Activated B cell treated with CpG ODN at 0.5 μM for 24 hours (primary cell): ENCODE measurements at regions of chr5 and their contacts with region 1.

Region 1: GRCh38 chr5:136080483-136081216 is 51.9 kb downstream of the TGFBI start:
- DNase-seq: peak; percentile 50
- ATAC-seq: peak; percentile 94
- H3K4me3 Mint-ChIP-seq: peak overlapping the region; percentile 77
- H3K27ac Mint-ChIP-seq: peak overlapping the region; percentile 47
- H3K4me1 Mint-ChIP-seq: peaks cover 15% of the 10 kb centered on the region
- H3K27me3 Mint-ChIP-seq: peaks cover 31% of the 10 kb centered on the region
- CTCF ChIP-seq: no peak

Region 2: GRCh38 chr5:136132557-136133221 is 52.0 kb after region 1 on chr5 and contains the start of gene SMAD5:
- CTCF ChIA-PET with region 1: no interaction called
- POLR2A ChIA-PET with region 1: no interaction called
- intact Hi-C with region 1: loop called (anchors 2 kb)
- DNase-seq: peak; percentile 83
- ATAC-seq: peak; percentile 91
- H3K4me3 Mint-ChIP-seq: peak within 1 kb of the TSS; percentile 96
- H3K27ac Mint-ChIP-seq: peak within 1 kb of the TSS; percentile 80
- H3K4me1 Mint-ChIP-seq: peaks cover 28% of the 10 kb centered on the region
- H3K27me3 Mint-ChIP-seq: peaks cover 13% of the 10 kb centered on the region
- CTCF ChIP-seq: no peak
- total RNA-seq, gene SMAD5: 28.4 and 30.4 TPM in 2 replicates